ENCODE measurements at regions of chr18 and their contacts with region 1.

Region 1: GRCh38 chr18:2547477-2548087 is 23.7 kb downstream of the METTL4 start:
- DNase-seq: no peak
- H3K4me3 ChIP-seq: no peak overlapping the region
- H3K27ac ChIP-seq: no peak overlapping the region
- H3K4me1 ChIP-seq: no peaks in the 10 kb centered on the region
- H3K27me3 ChIP-seq: no peaks in the 10 kb centered on the region
- CTCF ChIP-seq: peak in 2 of 4 experiments; percentile 24 to 54
- EP300 ChIP-seq: no peak
- POLR2A ChIP-seq: no peak

Region 2: GRCh38 chr18:1585879-1586488 is 961.6 kb before region 1 on chr18:
- intact Hi-C with region 1: loop called (anchors 5 kb)
- DNase-seq: no peak
- H3K4me3 ChIP-seq: no peak overlapping the region
- H3K27ac ChIP-seq: no peak overlapping the region
- H3K4me1 ChIP-seq: peaks cover 0 to 5% (median 0%) of the 10 kb centered on the region in 4 donors
- H3K27me3 ChIP-seq: no peaks in the 10 kb centered on the region
- CTCF ChIP-seq: peak in 2 of 4 experiments; percentile 20 to 30
- EP300 ChIP-seq: no peak
- POLR2A ChIP-seq: no peak

Region 3: GRCh38 chr18:2337552-2338141 is 209.9 kb before region 1 on chr18:
- intact Hi-C with region 1: loop called (anchors 10 kb)
- DNase-seq: no peak
- H3K4me3 ChIP-seq: no peak overlapping the region
- H3K27ac ChIP-seq: no peak overlapping the region
- H3K4me1 ChIP-seq: no peaks in the 10 kb centered on the region
- H3K27me3 ChIP-seq: no peaks in the 10 kb centered on the region
- CTCF ChIP-seq: peak in 2 of 4 experiments; percentile 15 to 44
- EP300 ChIP-seq: no peak
- POLR2A ChIP-seq: no peak

Measured in sigmoid colon (tissue), 7 donors.